Left colon (tissue), 2 donors: ENCODE measurements at regions of chr10 and their contacts with region 1.

Region 1: DNA sequence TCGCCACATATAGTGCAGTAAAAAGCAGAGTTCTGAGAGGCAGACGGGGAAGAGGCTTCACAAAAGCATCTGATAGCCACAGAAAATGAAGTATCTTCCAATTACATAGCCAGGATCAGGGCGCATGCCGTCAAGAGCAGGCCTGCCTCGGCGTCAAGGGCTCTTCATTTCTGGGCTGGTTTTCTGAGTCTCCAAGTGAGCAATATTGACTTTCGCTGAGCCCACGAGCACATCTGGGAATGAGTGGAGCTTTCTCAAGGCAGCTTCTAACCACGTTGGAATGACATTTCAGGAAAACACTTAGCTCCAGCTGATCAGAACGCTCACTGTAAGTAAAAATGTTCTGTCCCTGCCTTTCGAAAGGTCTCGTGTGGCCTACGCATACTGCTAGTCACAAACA is 51.9 kb downstream of the CLRN3 start:
- DNase-seq: no peak
- ATAC-seq: no peak

Region 2: DNA sequence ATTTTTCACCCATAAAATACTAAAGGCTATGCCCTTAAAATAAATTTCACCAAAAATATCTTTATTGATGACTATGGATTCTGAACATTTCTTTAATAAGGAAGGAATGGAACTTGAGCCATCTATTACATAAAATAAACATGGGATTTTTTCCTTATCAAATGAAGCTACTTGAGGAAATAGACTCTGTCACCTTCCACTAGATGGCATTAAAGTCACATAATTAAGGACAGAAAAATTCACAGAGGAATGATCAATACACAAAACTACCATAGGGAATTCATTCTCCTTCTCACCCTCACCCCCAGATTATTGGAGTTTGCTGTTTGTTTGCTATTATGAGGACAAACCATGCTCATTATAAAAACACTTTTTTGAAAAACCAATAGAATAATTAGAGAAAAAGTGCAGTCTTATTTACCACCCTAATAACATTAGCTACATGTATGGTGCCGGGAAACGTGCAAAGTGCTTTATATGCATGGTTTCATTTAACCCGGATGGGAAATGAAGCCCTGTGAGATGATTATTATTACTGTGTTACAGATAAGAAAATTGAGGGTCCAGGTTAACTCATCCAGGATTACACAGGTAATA is 125.0 kb before region 1 on chr10:
- intact Hi-C with region 1: loop called in 1 of 2 experiments (anchors 10 kb)
- DNase-seq: no peak
- ATAC-seq: no peak

Region 3: DNA sequence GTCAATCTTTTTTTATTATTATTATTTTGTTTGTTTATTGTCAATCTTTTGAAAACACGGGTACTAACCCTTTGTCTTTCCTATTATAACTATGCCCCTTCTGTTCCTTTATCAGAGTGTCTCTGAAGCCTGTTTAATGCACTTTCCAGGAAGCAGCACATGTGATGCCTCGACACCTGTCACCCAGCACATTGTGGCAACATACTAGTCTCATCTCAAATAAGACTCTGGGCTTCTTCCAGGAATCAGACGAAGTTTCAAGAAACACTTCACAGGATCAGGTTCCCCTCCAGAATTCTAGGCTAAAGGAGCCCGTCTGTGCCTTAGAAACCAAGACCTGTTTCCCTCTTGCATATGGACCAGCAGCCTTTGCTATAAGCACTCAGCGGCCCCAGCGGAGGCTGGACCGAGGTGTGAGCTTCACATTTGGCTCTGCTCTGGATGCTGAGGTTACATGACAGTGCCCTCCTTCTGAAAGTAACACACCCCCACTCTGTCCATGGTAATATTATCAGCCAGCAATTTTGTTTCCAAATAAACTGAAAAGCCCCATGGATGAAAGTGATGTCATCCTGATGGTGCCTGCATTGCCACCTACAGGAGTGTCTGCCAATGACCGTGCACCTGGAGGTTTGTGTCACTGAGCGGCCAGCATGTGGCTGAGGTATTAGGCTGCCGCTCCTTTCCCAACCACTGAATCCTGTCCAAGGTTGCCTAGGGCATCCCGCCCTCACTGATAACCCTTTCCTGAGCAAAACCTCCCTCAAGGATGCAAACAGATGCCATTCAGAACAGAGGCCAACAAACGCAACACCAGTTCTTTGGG is 247.2 kb after region 1 on chr10:
- intact Hi-C with region 1: no loop called
- DNase-seq: no peak
- ATAC-seq: peak; percentile 66